Mammary epithelial cell (primary cell): ENCODE measurements at regions of chr21 and their contacts with region 1.

Region 1: DNA sequence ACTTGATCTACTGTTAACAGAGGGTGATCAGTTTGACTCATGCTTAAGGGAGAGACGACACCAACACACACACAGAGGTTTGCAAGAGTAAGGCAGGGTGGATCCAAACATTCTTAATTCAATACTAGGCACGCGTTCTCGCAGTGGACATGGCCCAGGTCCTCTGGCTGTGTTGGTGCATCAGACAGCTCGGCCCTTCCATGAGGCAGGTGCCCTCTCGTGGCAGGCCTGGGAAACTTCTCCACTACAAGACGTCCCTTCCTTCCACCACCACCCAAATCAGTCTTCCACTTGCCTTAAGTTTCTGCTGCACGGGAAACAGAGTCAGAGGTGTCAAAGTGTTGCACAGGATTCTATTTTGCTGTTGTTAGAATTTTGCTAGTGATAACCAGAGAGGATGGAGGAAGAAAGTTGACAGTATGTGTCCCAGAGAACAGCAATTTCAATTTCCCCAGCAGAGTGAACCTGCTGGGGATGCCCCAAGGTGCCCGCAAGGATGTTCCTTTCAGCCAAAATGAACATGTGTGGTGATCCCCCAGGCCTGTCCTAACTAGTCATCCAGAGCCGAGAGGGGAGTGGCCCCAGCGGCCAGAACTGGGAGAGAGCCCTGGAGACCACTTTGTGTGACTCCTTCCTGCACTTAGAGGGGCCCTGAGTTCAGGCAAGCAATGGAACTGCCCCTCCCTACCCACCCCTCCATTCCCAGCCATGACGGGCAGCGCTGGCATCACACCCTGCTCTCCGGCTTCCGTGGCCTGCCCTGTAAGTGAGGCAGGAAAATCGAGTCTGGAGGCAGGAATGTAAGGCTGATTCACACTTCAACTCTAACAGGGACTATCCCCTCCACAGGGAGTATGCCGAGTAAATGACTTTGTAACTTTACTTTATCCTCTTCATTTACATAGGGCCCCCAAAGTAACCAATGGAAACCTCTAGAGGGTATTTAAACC is 34.8 kb downstream of the MX1 start:
- DNase-seq: peak; percentile 36
- H3K4me3 ChIP-seq: no peak overlapping the region
- H3K27ac ChIP-seq: no peak overlapping the region
- H3K4me1 ChIP-seq: no peaks in the 10 kb centered on the region
- H3K27me3 ChIP-seq: no peaks in the 10 kb centered on the region
- CTCF ChIP-seq: peak; percentile 79 to 94

Region 2: DNA sequence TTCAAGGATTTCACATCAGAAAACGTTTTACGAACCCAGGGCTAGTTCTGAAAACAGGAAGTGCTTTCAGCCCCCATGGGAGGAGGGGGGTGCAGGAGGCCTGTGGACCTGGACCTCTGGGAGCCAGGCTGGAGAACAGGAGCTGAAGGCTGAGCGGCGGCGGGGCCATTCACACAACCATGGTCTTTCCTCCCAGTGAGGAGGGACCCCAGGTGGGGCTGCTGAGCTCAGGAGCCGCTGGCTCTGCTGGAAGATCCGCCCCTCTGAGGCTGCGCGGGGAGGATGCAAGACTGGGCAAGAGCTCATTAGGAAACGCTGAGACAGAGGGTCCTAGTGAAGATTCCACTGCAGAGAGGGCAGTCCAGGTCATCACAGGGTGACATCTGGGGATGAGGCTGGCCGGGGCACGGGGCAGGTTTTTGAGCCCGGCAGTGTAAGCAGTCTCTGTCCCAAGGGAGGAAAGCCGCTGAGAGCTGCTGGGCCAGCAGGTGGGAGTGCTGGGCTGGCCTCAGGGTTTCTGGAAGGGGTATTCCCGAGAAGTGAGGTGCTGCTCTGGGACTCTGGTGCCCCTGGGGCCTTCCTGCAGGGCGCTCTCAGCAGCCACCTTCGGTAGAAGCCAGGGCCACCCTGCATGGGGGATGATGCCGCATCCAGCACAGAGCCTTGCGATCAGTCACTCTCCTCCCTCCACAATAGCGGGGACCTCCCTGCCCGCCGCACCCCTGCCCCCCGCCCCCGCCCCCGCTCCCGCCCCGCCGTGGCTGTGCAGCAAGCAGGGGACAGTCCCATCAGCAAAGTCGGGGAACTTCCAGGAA is 91.5 kb before region 1 on chr21:
- CTCF ChIA-PET with region 1: no interaction called
- dilution Hi-C with region 1: no loop called
- in situ Hi-C with region 1: no loop called
- intact Hi-C with region 1: loop called (anchors 1 kb)
- DNase-seq: no peak
- H3K4me3 ChIP-seq: no peak overlapping the region
- H3K27ac ChIP-seq: no peak overlapping the region
- H3K4me1 ChIP-seq: no peaks in the 10 kb centered on the region
- H3K27me3 ChIP-seq: peaks cover 3% of the 10 kb centered on the region
- CTCF ChIP-seq: no peak